Aorta (tissue), 5 donors: ENCODE measurements at regions of chr2 and their contacts with region 1.

Region 1: GRCh38 chr2:211435248-211435711 is 878.9 kb downstream of the CPS1 start:
- DNase-seq: no peak
- ATAC-seq: no peak
- H3K4me3 ChIP-seq: no peak overlapping the region
- H3K27ac ChIP-seq: no peak overlapping the region
- H3K4me1 ChIP-seq: peaks cover 0 to 1% of the 10 kb centered on the region in 2 donors
- H3K27me3 ChIP-seq: no peaks in the 10 kb centered on the region

Region 2: GRCh38 chr2:212580117-212580516 is 1144.8 kb after region 1 on chr2:
- intact Hi-C with region 1: loop called in 1 of 2 experiments (anchors 10 kb)
- DNase-seq: no peak
- ATAC-seq: no peak
- H3K4me3 ChIP-seq: no peak overlapping the region
- H3K27ac ChIP-seq: no peak overlapping the region
- H3K4me1 ChIP-seq: no peaks in the 10 kb centered on the region
- H3K27me3 ChIP-seq: no peaks in the 10 kb centered on the region